Activated CD4-positive, alpha-beta memory T cell treated with anti-CD3 and anti-CD28 coated beads for 36 hours (primary cell): ENCODE measurements at regions of chr17 and their contacts with region 1.

Region 1: GRCh38 chr17:62065598-62066468 is 755 bp upstream of the MED13 start:
- DNase-seq: peak; percentile 99
- H3K4me3 Mint-ChIP-seq: peak overlapping the region; percentile 94
- H3K27ac Mint-ChIP-seq: peak overlapping the region; percentile 96
- H3K4me1 Mint-ChIP-seq: peaks cover 30% of the 10 kb centered on the region
- H3K27me3 Mint-ChIP-seq: no peaks in the 10 kb centered on the region

Region 2: DNA sequence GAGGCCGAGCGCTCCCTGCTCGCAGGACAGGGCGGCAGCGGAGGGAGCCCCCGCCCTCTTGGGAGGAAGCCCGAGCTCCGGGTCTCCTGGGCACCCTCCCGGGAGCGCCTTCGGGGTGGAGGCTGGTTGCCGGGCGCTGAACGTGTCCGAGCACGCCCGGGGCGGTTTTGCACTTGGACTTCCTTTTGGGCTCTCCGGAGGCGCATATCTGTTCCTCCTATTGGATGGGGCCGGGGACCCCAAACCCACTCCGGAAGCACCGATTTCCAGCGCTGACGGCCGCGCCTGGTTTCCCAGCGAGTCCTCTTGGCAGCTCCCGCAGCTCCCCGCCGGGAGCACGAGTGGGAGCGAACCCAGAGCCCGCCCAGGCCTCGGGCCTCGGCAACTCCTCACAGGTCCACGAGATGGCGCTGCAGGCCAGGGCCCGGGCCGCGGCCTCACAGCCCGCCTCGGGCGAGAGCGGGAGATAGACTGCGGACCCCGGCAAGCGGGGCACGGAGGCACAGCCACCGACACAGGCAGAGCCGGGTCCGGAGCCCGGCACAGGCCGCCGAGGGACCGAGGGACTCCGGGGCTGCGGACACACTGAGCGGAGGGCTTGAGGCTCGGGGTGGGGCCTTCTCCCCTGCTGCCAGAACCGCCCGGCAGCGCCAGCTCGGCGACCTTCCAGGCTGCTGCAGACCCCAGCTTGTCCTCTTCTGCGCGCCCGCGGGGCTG is 653.5 kb before region 1 on chr17:
- CTCF ChIA-PET with region 1: interaction called, 4 read pairs
- POLR2A ChIA-PET with region 1: no interaction called
- intact Hi-C with region 1: loop called (anchors 1 kb)
- DNase-seq: peak; percentile 83
- H3K4me3 Mint-ChIP-seq: peak overlapping the region; percentile 65
- H3K27ac Mint-ChIP-seq: no peak overlapping the region
- H3K4me1 Mint-ChIP-seq: peaks cover 24% of the 10 kb centered on the region
- H3K27me3 Mint-ChIP-seq: peaks cover 33% of the 10 kb centered on the region

Region 3: GRCh38 chr17:61862975-61863800 is 202.6 kb before region 1 on chr17 and contains the start of gene BRIP1:
- CTCF ChIA-PET with region 1: interaction called, 10 read pairs
- POLR2A ChIA-PET with region 1: interaction called, 6 read pairs
- intact Hi-C with region 1: loop called (anchors 1 kb)
- DNase-seq: peak; percentile 95
- H3K4me3 Mint-ChIP-seq: peak within 1 kb of the TSS; percentile 96
- H3K27ac Mint-ChIP-seq: peak within 1 kb of the TSS; percentile 89
- H3K4me1 Mint-ChIP-seq: peaks cover 28% of the 10 kb centered on the region
- H3K27me3 Mint-ChIP-seq: no peaks in the 10 kb centered on the region
- total RNA-seq, gene BRIP1: 14.1 to 15.8 TPM

Region 4: GRCh38 chr17:61970019-61970418 is 95.8 kb before region 1 on chr17:
- CTCF ChIA-PET with region 1: interaction called, 5 read pairs
- POLR2A ChIA-PET with region 1: no interaction called
- intact Hi-C with region 1: loop called (anchors 10 kb)
- DNase-seq: no peak
- H3K4me3 Mint-ChIP-seq: no peak overlapping the region
- H3K27ac Mint-ChIP-seq: no peak overlapping the region
- H3K4me1 Mint-ChIP-seq: peaks cover 7% of the 10 kb centered on the region
- H3K27me3 Mint-ChIP-seq: no peaks in the 10 kb centered on the region

Region 5: GRCh38 chr17:62093188-62094155 is 27.6 kb after region 1 on chr17:
- CTCF ChIA-PET with region 1: interaction called, 5 read pairs
- POLR2A ChIA-PET with region 1: interaction called, 3 read pairs
- intact Hi-C with region 1: loop called (anchors 1 kb)
- DNase-seq: peak; percentile 56
- H3K4me3 Mint-ChIP-seq: no peak overlapping the region
- H3K27ac Mint-ChIP-seq: no peak overlapping the region
- H3K4me1 Mint-ChIP-seq: peaks cover 18% of the 10 kb centered on the region
- H3K27me3 Mint-ChIP-seq: no peaks in the 10 kb centered on the region